Right ventricle myocardium superior (tissue), 1 donor: ENCODE measurements at regions of chr16 and their contacts with region 1.

Region 1: DNA sequence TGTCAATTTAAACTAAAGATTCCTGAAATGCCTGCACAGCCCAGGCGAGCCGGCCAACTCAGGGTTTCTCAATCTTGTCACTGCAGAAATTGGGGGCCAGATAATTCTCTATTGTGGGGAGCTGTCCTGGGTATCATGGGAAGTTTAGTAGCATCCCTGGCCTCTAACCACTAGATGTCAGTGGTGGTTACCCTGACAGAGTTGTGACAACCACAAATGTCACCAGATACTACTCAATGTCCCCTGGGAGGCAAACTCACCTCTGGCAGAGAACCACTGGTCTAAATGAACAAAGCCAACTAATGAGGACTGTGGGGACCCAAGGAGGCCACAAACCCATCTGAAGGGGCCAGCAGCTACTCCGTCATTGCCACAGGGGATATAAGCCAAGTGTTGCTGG is 90.9 kb downstream of the MYH11 start:
- DNase-seq: no peak
- ATAC-seq: peak; percentile 92

Region 2: DNA sequence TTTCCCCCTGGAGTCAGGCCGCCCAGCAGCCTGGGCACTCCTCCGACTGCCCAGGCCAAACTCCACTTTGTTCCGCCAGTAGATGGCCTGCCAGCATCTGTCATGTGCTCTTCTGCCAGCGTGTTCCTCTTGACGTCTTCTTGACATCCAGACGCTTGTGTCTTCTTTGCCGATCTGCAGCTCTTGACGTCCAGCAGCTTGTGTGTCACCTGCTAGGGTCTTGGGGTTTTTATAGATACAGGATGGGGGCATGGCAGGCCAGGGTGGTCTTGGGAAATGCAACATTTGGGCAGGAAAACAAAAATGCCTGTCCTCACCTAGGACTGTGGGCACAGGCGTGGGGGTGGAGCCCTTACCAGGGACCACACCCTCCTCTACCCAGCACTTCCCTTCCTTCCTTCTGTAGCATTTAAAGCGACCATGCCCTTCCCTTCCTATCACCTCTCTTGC is 242.8 kb before region 1 on chr16:
- intact Hi-C with region 1: no loop called
- DNase-seq: peak; percentile 57
- ATAC-seq: peak; percentile 43

Region 3: GRCh38 chr16:15650019-15650697 is 115.7 kb before region 1 on chr16 and contains the start of gene NDE1:
- intact Hi-C with region 1: no loop called
- DNase-seq: peak; percentile 96
- ATAC-seq: peak; percentile 100
- total RNA-seq, gene NDE1: 12.6 TPM

Region 4: DNA sequence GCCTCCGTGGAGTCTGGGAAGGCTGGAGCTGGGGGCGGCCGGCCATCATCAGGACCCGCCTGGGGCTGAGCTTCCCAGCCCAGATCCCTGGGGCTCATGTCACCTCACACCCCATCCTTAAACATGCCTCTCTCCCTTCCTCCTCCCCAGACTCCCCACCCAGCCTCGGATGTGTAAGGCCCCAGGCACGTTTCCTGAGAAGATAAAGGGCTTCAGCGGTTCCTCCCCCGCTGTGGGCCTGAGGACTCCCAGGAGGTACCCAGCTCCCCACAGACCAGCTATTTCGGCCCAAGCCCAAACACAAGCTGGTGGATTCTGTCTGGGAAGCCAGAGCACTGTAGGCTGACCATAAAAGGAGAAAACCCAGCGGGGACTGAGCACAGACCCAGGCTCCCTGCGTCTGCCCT is 41.7 kb after region 1 on chr16:
- intact Hi-C with region 1: no loop called
- DNase-seq: no peak
- ATAC-seq: no peak

Region 5: DNA sequence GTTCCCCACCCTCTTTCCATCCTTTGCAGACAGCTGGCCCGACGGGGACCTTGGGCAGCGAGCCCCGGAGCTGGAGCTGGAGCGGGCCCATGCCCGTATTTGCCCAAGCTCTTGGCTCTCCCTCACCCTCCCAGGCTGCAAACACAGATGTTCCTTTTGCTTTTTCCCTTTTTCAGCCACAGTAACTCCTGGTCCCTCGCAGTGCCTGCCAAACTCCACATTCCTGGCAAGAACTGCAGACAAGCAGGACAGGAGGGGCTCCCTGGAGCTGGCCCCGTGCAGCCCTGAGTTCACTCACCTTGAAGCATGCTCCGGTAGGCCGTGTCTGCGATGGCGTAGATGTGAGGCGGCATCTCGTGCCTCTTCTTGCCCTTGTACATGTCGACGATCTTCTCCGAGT is 57.1 kb after region 1 on chr16:
- intact Hi-C with region 1: loop called (anchors 5 kb)
- DNase-seq: no peak
- ATAC-seq: no peak

Region 6: GRCh38 chr16:16127469-16128116 is 361.7 kb after region 1 on chr16:
- intact Hi-C with region 1: loop called (anchors 5 kb)
- DNase-seq: peak; percentile 69
- ATAC-seq: peak; percentile 90

Region 7: GRCh38 chr16:16175296-16175695 is 409.4 kb after region 1 on chr16:
- intact Hi-C with region 1: no loop called
- DNase-seq: peak; percentile 56
- ATAC-seq: peak; percentile 79

Region 8: GRCh38 chr16:16197847-16198365 is 432.0 kb after region 1 on chr16:
- intact Hi-C with region 1: loop called (anchors 5 kb)
- DNase-seq: no peak
- ATAC-seq: no peak